Activated naive CD4-positive, alpha-beta T cell treated with anti-CD3 and anti-CD28 coated beads for 36 hours (primary cell): ENCODE measurements at regions of chr3 and their contacts with region 1.

Region 1: GRCh38 chr3:50260027-50260941 is 8.7 kb upstream of the SEMA3B start:
- DNase-seq: peak; percentile 88
- H3K4me3 Mint-ChIP-seq: peak overlapping the region; percentile 66
- H3K27ac Mint-ChIP-seq: peak overlapping the region; percentile 69
- H3K4me1 Mint-ChIP-seq: peaks cover 4% of the 10 kb centered on the region
- H3K27me3 Mint-ChIP-seq: no peaks in the 10 kb centered on the region

Region 2: DNA sequence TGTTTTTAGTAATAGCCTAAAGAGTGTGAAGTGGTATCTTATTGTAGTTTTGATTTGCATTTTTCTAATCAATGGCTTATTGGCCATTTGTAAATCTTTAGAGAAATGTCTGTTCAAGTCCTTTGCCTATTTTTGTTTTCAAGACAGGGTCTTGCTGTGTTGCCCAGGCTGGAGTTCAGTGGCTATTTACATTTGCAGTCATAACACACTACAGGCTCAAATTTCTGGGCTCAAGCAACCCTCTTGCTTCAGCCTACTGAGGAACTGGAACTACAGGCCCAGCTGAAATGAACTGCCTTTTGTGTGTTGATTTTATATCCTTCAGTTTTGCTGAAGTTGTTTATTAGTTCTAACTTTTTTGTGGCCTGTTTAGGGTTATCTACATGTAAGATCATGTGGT is 678.1 kb before region 1 on chr3:
- CTCF ChIA-PET with region 1: no interaction called
- intact Hi-C with region 1: no loop called
- DNase-seq: no peak
- H3K4me3 Mint-ChIP-seq: no peak overlapping the region
- H3K27ac Mint-ChIP-seq: no peak overlapping the region
- H3K4me1 Mint-ChIP-seq: no peaks in the 10 kb centered on the region
- H3K27me3 Mint-ChIP-seq: no peaks in the 10 kb centered on the region

Region 3: DNA sequence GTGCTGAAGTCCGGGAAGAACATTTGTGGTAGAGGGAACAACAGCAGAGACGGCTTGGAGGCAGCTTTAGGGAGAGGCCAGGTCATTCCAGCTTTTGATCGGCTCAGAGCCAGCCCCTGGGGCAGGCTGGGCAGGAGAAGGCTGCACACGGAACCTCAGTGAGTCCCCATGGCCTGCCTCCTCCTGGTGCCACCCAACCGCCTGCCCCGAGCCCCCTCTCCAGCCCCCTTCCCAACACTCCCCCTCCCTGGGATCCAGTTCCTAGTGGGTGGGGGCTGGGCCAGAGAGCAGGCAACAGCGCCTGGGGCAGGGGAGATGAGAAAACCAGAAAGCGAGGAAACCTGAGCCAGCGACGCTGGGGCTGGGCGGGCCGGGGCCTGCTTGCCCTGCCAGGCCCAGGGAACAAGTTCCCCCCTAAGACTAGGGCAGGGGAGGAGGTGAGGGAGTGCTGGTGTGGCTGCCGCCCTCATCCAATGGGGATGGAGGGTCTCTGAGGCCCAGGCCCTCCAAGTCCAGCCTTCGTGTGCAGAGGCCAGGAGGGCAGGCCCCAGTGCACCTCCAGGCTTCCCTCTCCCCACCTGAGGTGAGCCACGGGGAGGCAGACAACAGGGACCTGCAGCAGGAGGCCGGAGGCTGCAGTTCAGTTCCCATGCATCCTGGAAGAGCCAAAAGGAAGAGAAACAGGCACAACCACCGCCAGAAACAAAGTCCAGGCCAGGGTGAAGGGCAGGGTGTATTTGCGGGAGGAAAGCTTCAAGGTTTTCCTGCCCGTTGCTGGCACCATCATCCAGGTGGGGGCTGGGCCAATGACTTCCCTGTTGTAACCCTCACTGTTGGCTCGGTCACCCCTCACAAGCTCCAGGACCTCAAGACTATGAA is 109.2 kb before region 1 on chr3:
- CTCF ChIA-PET with region 1: no interaction called
- intact Hi-C with region 1: no loop called
- DNase-seq: no peak
- H3K4me3 Mint-ChIP-seq: no peak overlapping the region
- H3K27ac Mint-ChIP-seq: no peak overlapping the region
- H3K4me1 Mint-ChIP-seq: peaks cover 6% of the 10 kb centered on the region
- H3K27me3 Mint-ChIP-seq: peaks cover 15% of the 10 kb centered on the region

Region 4: DNA sequence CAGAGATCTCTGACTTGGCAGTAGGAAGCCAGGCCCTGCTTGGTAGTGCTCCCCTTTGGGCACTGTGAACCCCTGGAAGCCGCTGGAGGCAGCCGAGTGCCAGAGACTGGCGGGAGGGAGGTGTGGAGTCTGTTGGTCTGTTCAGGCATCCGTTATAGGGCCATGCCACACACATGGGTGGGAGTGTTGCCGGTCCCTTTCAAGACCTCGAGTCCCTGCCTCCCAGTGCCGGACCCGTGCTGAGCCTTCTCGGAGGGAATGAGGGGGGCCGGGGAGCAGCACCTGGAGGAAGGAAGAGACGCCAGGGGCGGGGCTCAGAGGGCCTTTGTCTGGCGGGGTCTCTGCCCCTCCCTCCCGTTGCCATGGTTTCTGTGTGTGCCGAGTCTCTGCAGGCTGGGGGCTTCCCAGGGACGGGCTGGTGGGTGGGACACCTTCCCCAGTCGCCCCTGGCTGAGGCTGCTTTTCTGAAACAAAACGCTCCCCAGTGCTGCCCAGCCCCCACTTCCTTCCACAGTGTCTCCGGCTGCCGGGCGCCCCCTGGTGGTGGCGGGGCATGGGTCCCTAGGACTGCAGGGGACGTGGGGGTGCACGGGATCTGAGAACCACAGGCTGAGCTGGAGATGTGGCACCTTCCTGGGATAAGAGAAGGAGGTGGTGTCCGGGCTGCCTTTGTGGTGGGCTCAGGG is 14.3 kb before region 1 on chr3:
- CTCF ChIA-PET with region 1: interaction called, 38 read pairs
- intact Hi-C with region 1: loop called (anchors 1 kb)
- DNase-seq: peak; percentile 97
- H3K4me3 Mint-ChIP-seq: peak overlapping the region; percentile 81
- H3K27ac Mint-ChIP-seq: peak overlapping the region; percentile 95
- H3K4me1 Mint-ChIP-seq: peaks cover 82% of the 10 kb centered on the region
- H3K27me3 Mint-ChIP-seq: no peaks in the 10 kb centered on the region

Region 5: DNA sequence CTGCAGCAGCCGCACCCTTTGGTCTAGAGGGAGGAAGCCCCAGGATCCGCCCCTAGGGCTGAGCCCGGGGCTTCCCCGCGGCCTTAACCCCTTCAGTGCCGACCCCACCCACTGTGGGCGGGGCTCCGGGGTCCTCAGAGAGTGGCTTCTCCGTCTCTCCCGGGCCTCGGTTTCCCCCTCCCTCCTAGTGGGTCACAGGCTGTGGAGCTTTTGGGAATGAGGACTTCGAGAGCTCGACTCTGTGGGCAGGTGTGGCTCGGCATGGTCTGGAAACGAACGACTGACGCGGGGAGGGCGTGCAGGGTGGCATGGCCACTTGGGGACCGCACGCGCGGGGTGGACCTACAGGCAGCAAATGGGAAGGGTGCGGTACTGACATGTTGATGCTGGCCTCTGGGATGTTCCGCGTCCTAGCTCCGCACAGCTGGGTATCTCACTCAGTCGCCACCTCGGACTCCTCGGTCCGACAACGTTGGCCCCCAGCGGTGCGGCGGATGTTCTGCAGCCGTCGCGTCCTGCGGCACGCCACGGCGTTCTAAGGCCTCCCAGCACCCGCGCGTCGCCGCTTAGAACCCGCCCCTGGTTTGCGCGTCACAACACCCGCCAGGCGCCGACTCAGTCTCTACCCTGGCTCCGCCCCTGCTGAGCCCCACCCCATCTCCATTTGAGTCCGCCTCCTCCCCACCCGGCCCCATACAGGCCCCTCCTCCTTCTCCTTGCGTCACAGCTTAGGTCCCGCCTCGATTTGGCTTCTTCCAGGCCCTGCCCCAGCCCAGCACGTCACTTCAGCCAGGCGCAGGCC is 38.8 kb after region 1 on chr3 and contains the starts of genes HYAL3 and NAA80:
- CTCF ChIA-PET with region 1: no interaction called
- intact Hi-C with region 1: no loop called
- DNase-seq: peak; percentile 100
- H3K4me3 Mint-ChIP-seq: peak within 1 kb of the TSS; percentile 99
- H3K27ac Mint-ChIP-seq: peak within 1 kb of the TSS; percentile 97
- H3K4me1 Mint-ChIP-seq: peaks cover 25% of the 10 kb centered on the region
- H3K27me3 Mint-ChIP-seq: no peaks in the 10 kb centered on the region
- total RNA-seq, gene HYAL3: 0.74 to 0.88 TPM
- total RNA-seq, gene NAA80: 7.9 to 10.5 TPM